ENCODE measurements at regions of chr19 and their contacts with region 1.

Region 1: GRCh38 chr19:8513687-8514504 is at the start of gene ZNF414:
- DNase-seq: peak; percentile 94

Region 2: GRCh38 chr19:8389891-8390616 is 123.8 kb before region 1 on chr19 and contains the start of gene RAB11B:
- CTCF ChIA-PET with region 1: no interaction called
- POLR2A ChIA-PET with region 1: interaction called, 10 read pairs
- DNase-seq: peak; percentile 97

Region 3: DNA sequence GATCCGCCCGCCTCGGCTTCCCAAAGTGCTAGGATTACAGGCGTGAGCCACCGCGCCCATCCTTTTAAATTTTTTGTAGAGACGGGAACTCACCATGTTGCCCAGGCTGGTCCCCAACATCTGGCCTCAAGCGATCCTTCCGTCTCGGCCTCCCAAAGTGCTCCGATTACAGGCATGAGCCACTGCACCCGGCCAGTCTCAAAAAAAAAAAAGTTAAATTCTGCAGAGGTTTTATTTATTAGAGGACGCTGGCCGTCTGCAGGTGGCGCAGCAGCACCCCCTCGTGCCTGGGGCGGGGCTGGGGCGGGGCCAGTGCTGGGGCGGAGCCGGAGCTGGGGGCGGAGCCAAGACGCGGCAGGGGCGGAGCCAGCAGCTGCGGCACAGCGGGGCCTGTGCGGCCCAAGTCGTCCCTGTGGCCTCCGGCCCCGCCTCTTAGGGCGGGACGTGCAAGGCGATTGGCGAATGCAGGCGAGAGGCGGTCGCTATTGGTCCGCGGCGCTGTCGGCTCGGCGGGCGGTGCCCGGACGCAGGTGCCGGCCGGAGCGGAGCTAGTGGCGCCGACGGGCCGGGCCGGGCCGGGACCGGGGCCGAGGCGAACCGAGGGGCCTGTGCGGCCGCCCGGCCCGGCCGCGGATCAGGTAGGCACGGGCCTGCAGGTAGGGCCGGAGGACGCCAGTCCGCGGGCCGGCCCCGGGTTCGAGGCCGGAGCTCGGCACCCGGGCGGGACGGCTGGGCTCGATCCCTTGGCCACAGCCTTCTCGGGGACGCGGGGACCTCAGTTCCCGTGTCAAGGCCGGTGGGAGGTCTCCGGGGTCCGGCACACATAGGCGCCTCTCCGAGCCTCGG is 100.9 kb before region 1 on chr19 and contains the start of gene MARCHF2:
- CTCF ChIA-PET with region 1: no interaction called
- POLR2A ChIA-PET with region 1: interaction called, 15 read pairs
- DNase-seq: peak; percentile 99

Region 4: GRCh38 chr19:8451885-8452284 is 62.0 kb before region 1 on chr19:
- CTCF ChIA-PET with region 1: no interaction called
- POLR2A ChIA-PET with region 1: interaction called, 18 read pairs
- DNase-seq: no peak

Region 5: GRCh38 chr19:8494158-8494557 is 19.7 kb before region 1 on chr19:
- CTCF ChIA-PET with region 1: no interaction called
- POLR2A ChIA-PET with region 1: interaction called, 12 read pairs
- DNase-seq: no peak

Region 6: DNA sequence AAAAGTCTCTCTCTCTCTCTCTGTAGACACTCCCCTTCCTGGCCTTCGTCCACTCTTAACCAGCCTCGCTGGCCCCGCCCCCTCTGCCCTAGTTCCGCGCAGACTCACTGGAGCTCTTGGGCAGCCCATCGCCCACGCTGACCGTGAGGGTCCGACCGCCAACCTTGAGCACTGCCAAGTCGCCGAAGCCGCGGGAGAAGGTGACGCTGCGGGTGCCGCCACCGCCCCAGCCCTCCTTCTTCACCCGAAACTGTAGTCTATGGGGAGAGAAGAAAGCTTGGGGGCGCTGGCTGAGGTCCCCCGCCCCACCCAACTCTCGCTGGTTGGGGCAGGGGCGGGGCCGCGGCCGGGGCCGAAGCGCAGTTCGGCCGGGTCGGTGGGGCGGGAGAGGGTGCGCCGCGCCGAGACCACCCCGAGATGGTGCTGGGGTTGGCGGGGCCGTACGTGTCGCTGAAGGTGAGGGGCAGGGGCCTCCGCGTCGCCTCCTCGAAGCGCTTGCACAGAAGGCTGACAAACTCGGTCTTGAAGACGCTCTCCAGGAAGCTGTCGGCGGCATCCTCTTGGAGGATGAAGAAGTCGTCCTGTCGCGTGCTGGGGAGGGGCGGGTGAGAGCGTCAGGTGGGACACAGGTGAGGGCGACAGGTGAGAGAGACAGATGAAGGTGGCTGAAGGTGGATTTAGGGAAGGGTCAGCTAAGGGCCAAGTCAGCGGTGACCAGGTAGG is 12.6 kb after region 1 on chr19:
- CTCF ChIA-PET with region 1: interaction called, 5 read pairs
- POLR2A ChIA-PET with region 1: interaction called, 121 read pairs
- DNase-seq: peak; percentile 89

Region 7: DNA sequence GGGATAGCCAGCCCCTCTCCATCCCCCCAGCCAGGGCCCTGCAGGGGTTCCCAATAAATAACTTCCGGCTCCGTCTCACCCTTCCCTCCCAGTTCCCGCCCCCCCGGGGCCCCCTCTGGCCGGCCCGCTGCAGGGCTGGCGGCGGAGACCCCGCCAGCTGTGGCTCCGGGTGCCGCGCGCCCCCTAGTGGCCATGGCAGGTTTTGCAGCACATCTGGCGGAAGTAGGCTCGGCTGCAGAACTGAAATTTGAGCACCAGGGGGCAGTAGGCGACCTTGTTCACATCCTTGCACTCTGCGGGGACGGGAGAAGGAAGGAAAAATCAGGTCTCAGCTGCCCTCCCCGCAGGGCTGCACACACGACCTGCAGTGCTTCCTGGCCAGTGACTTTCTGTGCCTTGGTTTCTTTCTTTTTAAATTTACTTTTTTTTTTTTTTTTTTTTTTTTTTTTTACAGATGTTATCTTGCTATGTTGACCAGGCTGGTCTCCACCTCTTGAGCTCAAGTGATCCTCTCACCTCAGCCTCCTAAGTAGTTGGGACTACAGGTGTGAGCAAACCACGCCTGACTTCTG is 66.9 kb after region 1 on chr19:
- CTCF ChIA-PET with region 1: interaction called, 5 read pairs
- POLR2A ChIA-PET with region 1: interaction called, 25 read pairs
- DNase-seq: peak; percentile 80

Region 8: GRCh38 chr19:8626842-8627241 is 112.9 kb after region 1 on chr19:
- CTCF ChIA-PET with region 1: no interaction called
- POLR2A ChIA-PET with region 1: no interaction called
- DNase-seq: no peak

Measured in HEK293T (cell line).